ENCODE measurements at regions of chr4 and their contacts with region 1.

Region 1: GRCh38 chr4:98928505-98929340 is at the start of gene EIF4E:
- DNase-seq: peak; percentile 93 to 99 (median 94)
- ATAC-seq: peak; percentile 80
- H3K4me3 ChIP-seq: peak within 1 kb of the TSS; percentile 99 to 100
- H3K4me3 Mint-ChIP-seq: peak within 1 kb of the TSS; percentile 99
- H3K27ac ChIP-seq: peak within 1 kb of the TSS; percentile 89 to 94
- H3K27ac Mint-ChIP-seq: peak within 1 kb of the TSS; percentile 97
- H3K4me1 ChIP-seq: peaks cover 15% of the 10 kb centered on the region
- H3K4me1 Mint-ChIP-seq: peaks cover 46% of the 10 kb centered on the region
- H3K27me3 ChIP-seq: no peaks in the 10 kb centered on the region
- H3K27me3 Mint-ChIP-seq: no peaks in the 10 kb centered on the region
- CTCF ChIP-seq: peak; percentile 32
- total RNA-seq, gene EIF4E: 66.7 to 68.5 TPM

Region 2: DNA sequence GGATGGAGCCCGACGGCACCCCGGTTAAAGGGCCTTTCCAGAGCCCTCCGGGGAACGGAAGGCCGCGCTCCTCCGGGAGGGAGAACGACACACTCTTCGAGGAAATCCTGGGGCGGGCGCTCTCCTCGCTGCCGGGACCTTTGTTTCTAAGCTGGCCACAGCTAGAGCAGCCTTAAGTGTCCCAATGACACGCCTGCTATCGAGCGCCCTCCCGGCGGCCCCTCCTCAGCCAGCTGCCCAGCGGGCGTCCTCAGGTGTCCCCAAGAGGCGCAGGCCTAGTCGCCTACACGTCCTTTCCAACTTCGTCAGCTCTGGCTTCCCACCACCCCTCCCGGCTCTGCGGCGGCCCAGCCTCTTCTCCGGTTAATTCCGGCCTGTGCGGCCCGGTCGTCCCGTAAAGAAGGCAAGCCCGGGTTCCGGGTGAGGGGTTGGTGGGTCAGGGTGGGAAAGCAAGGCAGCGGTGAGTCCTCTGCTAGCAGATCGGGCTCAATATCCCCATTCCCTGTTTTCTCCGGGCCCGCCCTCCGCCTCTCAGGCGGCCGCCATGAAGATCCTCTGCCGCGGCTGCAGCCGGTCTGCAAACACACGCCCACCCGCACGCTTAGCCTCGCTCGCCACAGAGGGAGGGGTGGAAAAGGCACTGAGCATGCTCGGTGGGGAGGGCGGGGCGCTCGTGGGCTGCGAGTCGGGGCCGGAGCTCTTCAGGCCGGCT is 668.0 kb before region 1 on chr4:
- CTCF ChIA-PET with region 1: no interaction called
- POLR2A ChIA-PET with region 1: interaction called, 5 read pairs
- intact Hi-C with region 1: loop called (anchors 1 to 5 kb)
- DNase-seq: peak; percentile 67 to 95 (median 88)
- ATAC-seq: peak; percentile 72
- H3K4me3 ChIP-seq: peak overlapping the region; percentile 89 to 96
- H3K4me3 Mint-ChIP-seq: peak overlapping the region; percentile 94
- H3K27ac ChIP-seq: peak overlapping the region; percentile 77 to 79
- H3K27ac Mint-ChIP-seq: peak overlapping the region; percentile 95
- H3K4me1 ChIP-seq: peaks cover 27% of the 10 kb centered on the region
- H3K4me1 Mint-ChIP-seq: peaks cover 51% of the 10 kb centered on the region
- H3K27me3 ChIP-seq: no peaks in the 10 kb centered on the region
- H3K27me3 Mint-ChIP-seq: no peaks in the 10 kb centered on the region
- CTCF ChIP-seq: no peak

Region 3: DNA sequence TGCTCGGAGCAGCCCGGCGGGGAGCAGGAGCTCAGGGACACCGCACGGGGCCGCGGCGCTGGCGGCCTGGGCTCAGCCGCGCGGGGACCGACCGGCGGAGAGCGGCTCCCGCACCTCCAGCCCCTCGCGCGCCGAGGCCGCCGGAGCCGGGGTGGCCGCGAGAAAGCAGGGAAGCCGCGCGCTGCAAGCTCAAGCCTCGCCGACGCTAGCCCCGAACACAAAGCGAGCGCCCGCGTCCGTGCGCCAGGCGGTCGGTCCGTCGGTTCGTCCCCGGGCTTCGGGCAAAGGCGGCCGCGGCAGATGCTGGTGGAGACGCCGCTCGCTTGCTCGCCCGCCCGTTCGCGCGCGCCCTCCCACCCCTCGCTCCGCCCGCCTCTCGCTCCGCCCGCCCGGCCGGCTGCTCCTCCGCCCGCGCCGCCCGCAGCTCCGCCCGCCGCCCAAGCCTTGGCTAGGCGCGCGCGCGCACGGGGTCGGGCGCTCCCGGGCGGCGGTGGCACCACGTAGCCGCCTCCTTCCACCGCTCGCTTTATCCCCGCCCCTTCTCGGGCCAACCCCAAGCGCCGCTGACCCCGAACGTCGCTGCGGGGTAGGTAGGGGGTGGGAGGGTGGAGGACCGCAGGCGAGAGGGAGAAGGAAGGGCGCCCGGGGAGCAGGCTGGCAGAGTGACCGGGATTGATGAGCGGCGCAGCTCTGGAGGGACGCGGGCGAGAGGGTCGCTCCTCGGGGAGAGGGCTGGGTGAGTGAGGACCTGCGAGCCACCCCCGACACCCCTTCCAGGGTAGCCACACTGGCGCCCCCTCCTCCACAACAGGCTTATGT is 270.2 kb before region 1 on chr4 and contains the start of gene TSPAN5:
- CTCF ChIA-PET with region 1: no interaction called
- POLR2A ChIA-PET with region 1: interaction called, 4 read pairs
- intact Hi-C with region 1: loop called (anchors 1 kb)
- DNase-seq: peak; percentile 49 to 90 (median 82)
- ATAC-seq: peak; percentile 64
- H3K4me3 ChIP-seq: peak within 1 kb of the TSS; percentile 81 to 86
- H3K4me3 Mint-ChIP-seq: peak within 1 kb of the TSS; percentile 97
- H3K27ac ChIP-seq: peak within 1 kb of the TSS; percentile 14 to 60
- H3K27ac Mint-ChIP-seq: peak within 1 kb of the TSS; percentile 88
- H3K4me1 ChIP-seq: peaks cover 56% of the 10 kb centered on the region
- H3K4me1 Mint-ChIP-seq: peaks cover 80% of the 10 kb centered on the region
- H3K27me3 ChIP-seq: no peaks in the 10 kb centered on the region
- H3K27me3 Mint-ChIP-seq: no peaks in the 10 kb centered on the region
- CTCF ChIP-seq: no peak
- total RNA-seq, gene TSPAN5: 1.6 to 1.9 TPM

Region 4: GRCh38 chr4:99054428-99054994 is 125.8 kb after region 1 on chr4:
- CTCF ChIA-PET with region 1: interaction called, 5 read pairs
- POLR2A ChIA-PET with region 1: no interaction called
- intact Hi-C with region 1: loop called (anchors 1 to 5 kb)
- DNase-seq: no peak
- ATAC-seq: no peak
- H3K4me3 ChIP-seq: no peak overlapping the region
- H3K4me3 Mint-ChIP-seq: no peak overlapping the region
- H3K27ac ChIP-seq: peak overlapping the region in 1 of 2 experiments; percentile 15
- H3K27ac Mint-ChIP-seq: peak overlapping the region; percentile 42
- H3K4me1 ChIP-seq: peaks cover 3% of the 10 kb centered on the region
- H3K4me1 Mint-ChIP-seq: peaks cover 7% of the 10 kb centered on the region
- H3K27me3 ChIP-seq: no peaks in the 10 kb centered on the region
- H3K27me3 Mint-ChIP-seq: no peaks in the 10 kb centered on the region
- CTCF ChIP-seq: no peak

Region 5: DNA sequence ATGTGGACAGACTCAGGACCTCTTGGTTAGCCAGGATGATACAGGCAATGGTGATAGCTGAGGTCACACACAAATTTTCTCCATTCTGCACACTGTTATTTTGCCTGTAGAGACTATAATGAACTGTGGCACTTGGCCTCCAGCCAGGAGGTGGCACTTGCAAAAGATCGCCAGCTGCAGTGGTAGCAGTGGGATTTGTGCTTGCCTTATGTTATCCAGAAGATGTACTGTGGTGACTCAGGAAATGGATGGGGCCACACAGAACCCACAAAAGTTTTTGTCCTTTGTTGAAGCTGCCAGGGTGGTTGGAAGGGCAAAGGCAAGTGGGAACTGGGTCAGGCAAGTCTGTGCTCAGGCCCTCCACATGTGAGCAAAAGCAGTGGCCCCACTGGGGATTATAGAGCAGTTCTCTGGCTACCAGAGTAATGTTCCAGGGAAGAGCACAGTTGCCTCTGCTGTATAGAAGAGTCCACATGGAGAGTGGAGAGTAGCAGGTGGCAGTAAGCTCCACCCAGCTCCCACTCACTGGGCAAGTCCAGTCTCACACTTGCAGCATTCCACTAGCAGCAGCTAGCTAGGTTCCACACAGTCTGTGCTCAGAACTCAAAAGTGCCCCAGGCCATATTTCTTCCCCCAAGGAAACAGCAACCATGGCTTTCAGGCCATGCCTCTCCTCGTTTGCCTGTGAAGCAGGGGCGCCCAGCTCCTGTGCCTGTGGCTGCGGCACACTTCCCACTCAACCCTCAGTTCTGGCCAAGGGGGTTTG is 576.3 kb after region 1 on chr4:
- CTCF ChIA-PET with region 1: no interaction called
- POLR2A ChIA-PET with region 1: no interaction called
- intact Hi-C with region 1: loop called in 1 of 2 experiments (anchors 5 kb)
- DNase-seq: no peak
- ATAC-seq: no peak
- H3K4me3 ChIP-seq: no peak overlapping the region
- H3K4me3 Mint-ChIP-seq: no peak overlapping the region
- H3K27ac ChIP-seq: no peak overlapping the region
- H3K27ac Mint-ChIP-seq: peak overlapping the region; percentile 23
- H3K4me1 ChIP-seq: peaks cover 35% of the 10 kb centered on the region
- H3K4me1 Mint-ChIP-seq: peaks cover 39% of the 10 kb centered on the region
- H3K27me3 ChIP-seq: no peaks in the 10 kb centered on the region
- H3K27me3 Mint-ChIP-seq: no peaks in the 10 kb centered on the region
- CTCF ChIP-seq: no peak

Region 6: DNA sequence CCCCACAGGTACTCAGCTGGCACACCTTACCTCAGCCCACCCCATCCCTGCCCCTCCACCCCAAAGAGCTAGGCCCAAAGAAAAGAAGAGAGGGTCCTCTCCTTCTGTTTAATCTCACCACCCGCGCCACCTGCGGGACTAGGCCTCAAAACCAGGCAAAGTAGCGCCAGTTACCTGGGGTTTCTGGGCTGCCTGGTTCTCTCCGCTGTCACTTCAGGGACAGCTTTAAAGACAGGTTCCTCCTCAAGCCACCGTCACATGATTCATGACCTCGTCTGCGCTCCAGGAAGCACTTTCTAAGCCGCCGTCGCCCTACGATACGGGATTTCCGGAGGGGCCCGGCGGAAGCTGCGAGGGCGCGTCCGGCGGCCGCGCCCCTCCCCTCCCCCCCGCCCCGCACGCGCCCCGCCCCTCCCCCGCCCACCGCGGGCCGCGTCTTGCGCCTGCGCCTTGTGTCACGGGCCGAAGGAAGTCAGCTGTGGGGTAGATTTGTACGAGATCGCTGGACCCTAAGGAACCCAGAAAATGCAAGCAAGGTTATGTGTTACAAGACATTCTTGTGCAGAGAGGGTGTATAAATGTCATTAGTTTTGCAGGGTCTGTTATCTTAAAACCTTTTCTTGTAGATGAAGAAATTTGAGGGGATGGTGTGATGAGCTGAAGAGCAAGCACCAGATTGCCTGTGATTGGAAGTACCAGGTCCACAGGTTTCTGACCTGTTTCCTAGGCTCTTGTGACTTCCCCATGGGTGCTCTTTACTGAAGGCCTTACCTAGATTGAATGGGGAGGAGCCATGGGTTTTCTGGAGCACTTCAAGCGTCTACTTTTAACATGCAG is 965.7 kb after region 1 on chr4 and contains the start of gene LAMTOR3:
- CTCF ChIA-PET with region 1: no interaction called
- POLR2A ChIA-PET with region 1: no interaction called
- intact Hi-C with region 1: loop called in 1 of 2 experiments (anchors 2 kb)
- DNase-seq: peak; percentile 80 to 97 (median 88)
- ATAC-seq: peak; percentile 94
- H3K4me3 ChIP-seq: peak within 1 kb of the TSS; percentile 68 to 80
- H3K4me3 Mint-ChIP-seq: peak within 1 kb of the TSS; percentile 97
- H3K27ac ChIP-seq: peak within 1 kb of the TSS; percentile 77 to 87
- H3K27ac Mint-ChIP-seq: peak within 1 kb of the TSS; percentile 98
- H3K4me1 ChIP-seq: peaks cover 30% of the 10 kb centered on the region
- H3K4me1 Mint-ChIP-seq: peaks cover 49% of the 10 kb centered on the region
- H3K27me3 ChIP-seq: no peaks in the 10 kb centered on the region
- H3K27me3 Mint-ChIP-seq: no peaks in the 10 kb centered on the region
- CTCF ChIP-seq: no peak
- total RNA-seq, gene LAMTOR3: 29.3 to 32.4 TPM

Measured in CD8-positive, alpha-beta T cell (primary cell).